ENCODE measurements at regions of chr6 and their contacts with region 1.

Region 1: GRCh38 chr6:36280983-36281382 is 11.1 kb downstream of the PNPLA1 start:
- DNase-seq: no peak
- ATAC-seq: no peak
- H3K4me3 ChIP-seq: no peak overlapping the region
- H3K27ac ChIP-seq: no peak overlapping the region
- H3K4me1 ChIP-seq: no peaks in the 10 kb centered on the region
- H3K27me3 ChIP-seq: peaks cover 0 to 7% of the 10 kb centered on the region in 2 experiments; a peak in 2 of 5 replicates
- CTCF ChIP-seq: no peak
- EP300 ChIP-seq: no peak
- POLR2A ChIP-seq: no peak
- RAD21 ChIP-seq: no peak

Region 2: DNA sequence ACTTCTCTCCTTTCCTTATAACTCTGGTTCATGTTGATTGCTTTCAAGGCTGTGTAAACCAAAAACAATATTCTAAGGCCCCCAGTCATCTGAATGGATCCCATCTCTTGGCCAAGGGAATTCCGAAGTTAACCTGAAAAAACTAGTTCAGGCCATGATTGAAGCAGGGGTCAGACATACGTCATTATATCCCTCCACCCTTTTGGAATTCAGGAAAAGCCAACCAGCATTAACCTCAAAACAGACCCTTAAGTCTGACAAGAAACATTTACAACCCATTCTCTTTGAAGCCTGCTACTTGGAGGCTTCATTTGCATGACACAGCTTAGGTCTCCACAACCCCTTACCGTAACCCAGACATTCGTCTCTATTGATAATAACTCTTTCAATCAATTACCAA is 296.3 kb before region 1 on chr6:
- CTCF ChIA-PET with region 1: no interaction called
- POLR2A ChIA-PET with region 1: no interaction called
- in situ Hi-C with region 1: no loop called
- intact Hi-C with region 1: no loop called
- DNase-seq: no peak
- ATAC-seq: no peak
- H3K4me3 ChIP-seq: no peak overlapping the region
- H3K27ac ChIP-seq: no peak overlapping the region
- H3K4me1 ChIP-seq: no peaks in the 10 kb centered on the region; the same call in 1 of the 2 replicates
- H3K27me3 ChIP-seq: peaks cover 0 to 20% of the 10 kb centered on the region in 2 experiments; a peak in 2 of 5 replicates
- CTCF ChIP-seq: no peak
- EP300 ChIP-seq: no peak
- POLR2A ChIP-seq: no peak
- RAD21 ChIP-seq: no peak

Region 3: GRCh38 chr6:36248980-36249379 is 32.0 kb before region 1 on chr6:
- CTCF ChIA-PET with region 1: no interaction called
- POLR2A ChIA-PET with region 1: no interaction called
- in situ Hi-C with region 1: no loop called
- intact Hi-C with region 1: loop called (anchors 1 kb)
- DNase-seq: peak; percentile 34
- ATAC-seq: peak; percentile 15; the same call in 2 of the 3 replicates
- H3K4me3 ChIP-seq: no peak overlapping the region
- H3K27ac ChIP-seq: no peak overlapping the region
- H3K4me1 ChIP-seq: peaks cover 35% of the 10 kb centered on the region
- H3K27me3 ChIP-seq: no peaks in the 10 kb centered on the region
- CTCF ChIP-seq: no peak; the same call in 1 of the 2 replicates
- EP300 ChIP-seq: no peak
- POLR2A ChIP-seq: no peak
- RAD21 ChIP-seq: no peak

Region 4: DNA sequence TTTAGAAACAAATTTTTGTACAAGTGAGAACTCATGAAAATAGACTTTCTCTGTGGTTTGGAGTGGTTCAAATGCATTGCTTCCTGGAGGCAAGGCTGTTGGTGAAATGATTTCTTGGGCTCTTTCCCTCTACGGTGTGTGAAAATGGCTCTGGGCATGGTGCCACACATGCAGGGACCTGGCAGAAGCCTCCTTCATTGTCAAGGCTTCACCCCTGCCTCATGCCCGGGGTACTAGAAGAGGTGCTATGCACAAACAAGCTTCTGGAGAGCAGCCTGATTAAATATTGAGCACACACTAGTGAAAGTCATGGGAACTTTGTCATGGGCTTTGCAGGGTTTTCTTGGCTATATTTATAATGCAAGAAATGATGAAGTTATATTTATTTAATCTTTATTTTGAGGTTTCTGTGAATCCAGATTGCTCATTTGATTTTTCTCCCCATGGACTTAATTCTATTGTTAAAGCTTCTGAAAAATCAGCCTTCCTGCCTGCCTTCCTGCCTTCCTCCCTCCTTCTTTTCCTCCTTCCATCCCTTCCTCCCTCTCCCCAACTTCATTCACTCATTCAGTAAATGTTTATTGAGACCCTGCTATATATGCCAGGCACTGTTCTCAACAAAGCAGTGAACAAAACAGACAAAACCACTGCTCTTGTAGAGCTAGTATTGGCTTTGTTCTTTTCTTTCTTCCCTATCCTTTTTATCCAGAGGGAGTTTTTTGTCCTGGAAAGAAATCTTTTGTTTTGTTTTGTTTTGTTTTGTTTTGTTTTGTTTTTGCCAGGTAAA is 625.7 kb after region 1 on chr6:
- CTCF ChIA-PET with region 1: no interaction called
- POLR2A ChIA-PET with region 1: no interaction called
- in situ Hi-C with region 1: no loop called
- intact Hi-C with region 1: no loop called
- DNase-seq: no peak
- ATAC-seq: no peak
- H3K4me3 ChIP-seq: no peak overlapping the region
- H3K27ac ChIP-seq: no peak overlapping the region
- H3K4me1 ChIP-seq: no peaks in the 10 kb centered on the region
- H3K27me3 ChIP-seq: no peaks in the 10 kb centered on the region
- CTCF ChIP-seq: no peak
- EP300 ChIP-seq: no peak
- POLR2A ChIP-seq: no peak
- RAD21 ChIP-seq: no peak

Measured in HepG2 (cell line).